ENCODE measurements at regions of chr4 and their contacts with region 1.

Region 1: DNA sequence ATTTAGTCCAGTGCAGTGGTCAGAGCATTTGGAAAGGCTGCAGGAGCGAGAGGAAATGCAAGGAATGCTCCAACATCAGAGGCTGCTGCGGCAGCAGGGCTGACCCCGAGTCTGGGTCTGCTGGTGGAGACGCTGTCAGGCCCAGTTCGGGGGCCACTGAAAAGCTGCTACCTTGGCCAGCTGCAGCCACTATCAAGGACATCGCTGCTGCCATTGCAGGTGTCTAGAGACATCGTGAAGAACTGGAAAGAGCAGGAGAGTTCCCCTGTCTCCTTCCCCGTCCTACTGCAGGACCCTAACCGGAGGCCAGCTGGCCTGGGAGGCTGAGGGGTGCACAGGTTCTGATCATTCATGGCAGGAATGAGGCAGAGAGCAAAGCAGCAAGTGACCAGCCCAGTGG is 29.5 kb upstream of the GPR78 start:
- DNase-seq: no peak
- H3K4me3 ChIP-seq: no peak overlapping the region
- H3K27ac ChIP-seq: no peak overlapping the region
- H3K4me1 ChIP-seq: no peaks in the 10 kb centered on the region
- H3K27me3 ChIP-seq: no peaks in the 10 kb centered on the region
- CTCF ChIP-seq: no peak
- POLR2A ChIP-seq: no peak

Region 2: DNA sequence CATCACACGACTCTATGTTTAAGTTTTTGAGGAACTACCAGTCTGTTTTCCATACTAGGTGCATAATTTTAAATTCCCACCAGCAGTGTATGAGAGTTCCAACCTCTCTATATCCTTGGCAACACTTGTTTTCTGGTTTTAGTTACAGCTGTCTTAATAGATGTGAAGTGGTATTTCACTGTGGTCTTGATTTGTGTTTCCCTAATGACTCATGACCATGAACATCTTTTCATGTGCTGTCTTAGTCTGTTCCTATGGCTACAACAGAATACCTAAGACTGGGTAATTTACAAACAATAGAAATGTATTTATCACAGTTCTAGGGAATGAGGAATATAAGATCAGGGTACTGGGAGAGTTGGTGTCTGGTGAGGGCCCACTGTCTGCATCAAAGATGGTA is 22.0 kb before region 1 on chr4:
- intact Hi-C with region 1: no loop called
- DNase-seq: no peak
- H3K4me3 ChIP-seq: no peak overlapping the region
- H3K27ac ChIP-seq: no peak overlapping the region
- H3K4me1 ChIP-seq: no peaks in the 10 kb centered on the region
- H3K27me3 ChIP-seq: no peaks in the 10 kb centered on the region
- CTCF ChIP-seq: no peak
- POLR2A ChIP-seq: no peak

Region 3: DNA sequence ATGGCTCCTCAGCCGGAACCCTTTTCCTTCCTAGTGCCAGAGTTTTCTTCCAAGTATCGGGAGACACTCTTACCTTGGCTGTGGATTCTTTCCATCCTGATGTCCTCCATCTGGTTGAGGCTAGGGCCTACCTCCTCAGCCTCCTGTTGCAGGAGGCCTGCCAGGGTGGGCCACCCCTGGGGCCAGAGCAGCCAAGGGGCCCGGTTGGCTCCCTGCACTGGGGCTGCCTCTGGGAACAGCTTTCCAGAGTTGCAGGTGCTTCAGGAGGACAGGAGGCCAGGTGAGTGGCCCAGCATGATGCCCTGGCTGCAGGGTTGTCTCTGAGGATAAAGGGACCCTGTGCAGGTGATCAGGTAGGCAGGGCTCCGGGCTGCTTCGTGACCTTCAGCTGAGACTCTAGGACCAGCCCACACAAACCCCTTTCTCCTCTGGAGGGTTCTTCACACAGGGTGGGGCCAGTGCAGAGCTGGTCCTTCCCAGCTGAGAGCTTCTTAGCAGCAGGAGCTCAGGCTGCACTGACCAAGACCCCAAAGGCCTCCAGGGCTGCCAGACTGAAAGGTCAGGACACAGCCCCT is 24.2 kb after region 1 on chr4:
- intact Hi-C with region 1: loop called (anchors 1 kb)
- DNase-seq: no peak
- H3K4me3 ChIP-seq: no peak overlapping the region
- H3K27ac ChIP-seq: no peak overlapping the region
- H3K4me1 ChIP-seq: no peaks in the 10 kb centered on the region
- H3K27me3 ChIP-seq: peaks cover 0 to 15% of the 10 kb centered on the region in 2 donors
- CTCF ChIP-seq: no peak
- POLR2A ChIP-seq: no peak

Measured in breast epithelium (tissue), 4 donors.